K562 (cell line): ENCODE measurements at regions of chr3 and their contacts with region 1.

Region 1: GRCh38 chr3:196192036-196192523 is 19.1 kb downstream of the ZDHHC19 start:
- DNase-seq: peak in 1 of 4 experiments; percentile 34
- ATAC-seq: no peak
- H3K4me3 ChIP-seq: no peak overlapping the region
- H3K27ac ChIP-seq: peak overlapping the region; percentile 62; the same call in 2 of the 3 replicates
- H3K4me1 ChIP-seq: peaks cover 46 to 83% of the 10 kb centered on the region in 2 experiments
- H3K27me3 ChIP-seq: no peaks in the 10 kb centered on the region
- CTCF ChIP-seq: no peak
- EP300 ChIP-seq: no peak
- POLR2A ChIP-seq: no peak
- RAD21 ChIP-seq: peak in 1 of 2 experiments; percentile 24; a peak in 1 of 4 replicates

Region 2: DNA sequence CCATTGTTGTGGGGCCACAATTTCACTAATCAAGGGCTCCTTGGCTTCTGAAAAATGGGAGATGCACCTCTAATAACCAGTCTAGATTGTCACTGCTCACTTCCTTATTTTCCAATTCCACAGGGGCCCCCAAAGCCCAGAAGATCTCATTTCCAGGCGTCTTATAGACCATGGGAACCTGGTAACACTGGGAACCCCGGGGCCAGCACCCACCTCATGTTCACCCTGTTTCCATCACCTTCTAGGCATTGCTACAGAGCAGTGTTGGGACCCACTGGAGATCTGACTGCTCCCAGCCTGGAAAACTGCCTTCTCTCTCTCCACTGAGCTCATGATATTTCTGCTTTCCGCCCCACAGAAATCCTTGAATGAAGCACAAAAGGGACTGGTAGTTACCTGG is 171.7 kb before region 1 on chr3:
- CTCF ChIA-PET with region 1: interaction called, 19 read pairs
- POLR2A ChIA-PET with region 1: interaction called, 4 read pairs
- in situ Hi-C with region 1: no loop called
- intact Hi-C with region 1: loop called (anchors 1 kb)
- DNase-seq: no peak
- ATAC-seq: no peak
- H3K4me3 ChIP-seq: no peak overlapping the region
- H3K27ac ChIP-seq: no peak overlapping the region
- H3K4me1 ChIP-seq: peaks cover 6 to 7% of the 10 kb centered on the region in 2 experiments; a peak in 4 of 5 replicates
- H3K27me3 ChIP-seq: no peaks in the 10 kb centered on the region
- CTCF ChIP-seq: no peak
- EP300 ChIP-seq: no peak
- POLR2A ChIP-seq: no peak
- RAD21 ChIP-seq: no peak

Region 3: GRCh38 chr3:196073188-196073838 is 118.8 kb before region 1 on chr3:
- CTCF ChIA-PET with region 1: interaction called, 49 read pairs
- POLR2A ChIA-PET with region 1: interaction called, 28 read pairs
- in situ Hi-C with region 1: loop called (anchors 5 kb)
- intact Hi-C with region 1: loop called (anchors 1 kb)
- DNase-seq: peak; percentile 41 to 75 (median 50)
- ATAC-seq: peak; percentile 88
- H3K4me3 ChIP-seq: no peak overlapping the region
- H3K27ac ChIP-seq: no peak overlapping the region
- H3K4me1 ChIP-seq: peaks cover 7 to 9% of the 10 kb centered on the region in 2 experiments; a peak in 3 of 5 replicates
- H3K27me3 ChIP-seq: no peaks in the 10 kb centered on the region
- CTCF ChIP-seq: peak; percentile 66 to 80 (median 74)
- EP300 ChIP-seq: no peak
- POLR2A ChIP-seq: peak; percentile 55
- RAD21 ChIP-seq: peak; percentile 67 to 75

Region 4: DNA sequence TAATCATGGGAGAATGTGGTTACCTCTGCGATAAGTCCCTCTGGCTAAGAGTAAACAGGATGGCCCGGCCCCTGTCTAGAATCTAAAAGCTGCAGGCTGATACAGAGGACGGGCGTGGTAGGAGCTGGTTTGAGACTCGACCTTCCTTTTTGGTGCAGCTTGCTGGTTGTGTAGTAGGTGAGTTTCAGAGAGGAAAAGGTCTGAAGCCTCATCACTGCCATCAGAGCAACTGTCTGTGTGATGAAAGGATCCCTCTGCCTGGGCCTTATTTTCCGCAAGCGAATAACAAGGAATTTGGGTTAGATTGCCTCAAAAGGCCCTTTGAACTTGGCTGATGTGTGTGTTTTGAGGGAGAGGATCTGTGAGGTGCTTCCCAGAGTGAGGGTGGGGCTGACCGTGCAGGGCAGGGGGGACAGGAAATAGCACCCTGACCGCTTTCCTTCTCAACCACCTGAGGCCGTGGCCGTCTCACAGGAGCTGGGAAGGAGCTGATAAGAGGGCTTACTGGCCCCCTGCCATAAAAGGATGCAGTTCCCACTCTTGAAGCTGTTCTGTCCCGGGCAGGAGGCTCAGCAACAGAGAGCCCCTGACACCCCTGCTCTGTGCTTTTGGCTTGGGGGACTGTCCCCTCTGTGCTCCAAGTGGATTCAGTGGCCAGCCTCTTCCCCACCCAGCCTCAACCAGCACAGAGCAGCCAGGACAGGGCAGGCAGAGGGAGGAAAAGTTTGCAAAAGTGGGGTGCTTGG is 64.6 kb before region 1 on chr3:
- CTCF ChIA-PET with region 1: no interaction called
- POLR2A ChIA-PET with region 1: no interaction called
- in situ Hi-C with region 1: no loop called
- intact Hi-C with region 1: loop called (anchors 2 kb)
- DNase-seq: peak; percentile 81 to 98 (median 88)
- ATAC-seq: peak; percentile 90
- H3K4me3 ChIP-seq: peak overlapping the region; percentile 14; the same call in 1 of the 2 replicates
- H3K27ac ChIP-seq: peak overlapping the region; percentile 96
- H3K4me1 ChIP-seq: peaks cover 33% of the 10 kb centered on the region in 2 experiments
- H3K27me3 ChIP-seq: no peaks in the 10 kb centered on the region
- CTCF ChIP-seq: peak in 2 of 3 experiments; percentile 15 to 49; a peak in 2 of 6 replicates
- EP300 ChIP-seq: peak; percentile 89
- POLR2A ChIP-seq: peak; percentile 53; the same call in 1 of the 2 replicates
- RAD21 ChIP-seq: peak; percentile 43 to 67; a peak in 3 of 4 replicates

Region 5: GRCh38 chr3:196251918-196252317 is 59.8 kb after region 1 on chr3:
- CTCF ChIA-PET with region 1: no interaction called
- POLR2A ChIA-PET with region 1: no interaction called
- in situ Hi-C with region 1: no loop called
- intact Hi-C with region 1: no loop called
- DNase-seq: no peak
- ATAC-seq: no peak
- H3K4me3 ChIP-seq: no peak overlapping the region
- H3K27ac ChIP-seq: no peak overlapping the region
- H3K4me1 ChIP-seq: no peaks in the 10 kb centered on the region
- H3K27me3 ChIP-seq: no peaks in the 10 kb centered on the region
- CTCF ChIP-seq: no peak
- EP300 ChIP-seq: no peak
- POLR2A ChIP-seq: no peak
- RAD21 ChIP-seq: no peak

Region 6: DNA sequence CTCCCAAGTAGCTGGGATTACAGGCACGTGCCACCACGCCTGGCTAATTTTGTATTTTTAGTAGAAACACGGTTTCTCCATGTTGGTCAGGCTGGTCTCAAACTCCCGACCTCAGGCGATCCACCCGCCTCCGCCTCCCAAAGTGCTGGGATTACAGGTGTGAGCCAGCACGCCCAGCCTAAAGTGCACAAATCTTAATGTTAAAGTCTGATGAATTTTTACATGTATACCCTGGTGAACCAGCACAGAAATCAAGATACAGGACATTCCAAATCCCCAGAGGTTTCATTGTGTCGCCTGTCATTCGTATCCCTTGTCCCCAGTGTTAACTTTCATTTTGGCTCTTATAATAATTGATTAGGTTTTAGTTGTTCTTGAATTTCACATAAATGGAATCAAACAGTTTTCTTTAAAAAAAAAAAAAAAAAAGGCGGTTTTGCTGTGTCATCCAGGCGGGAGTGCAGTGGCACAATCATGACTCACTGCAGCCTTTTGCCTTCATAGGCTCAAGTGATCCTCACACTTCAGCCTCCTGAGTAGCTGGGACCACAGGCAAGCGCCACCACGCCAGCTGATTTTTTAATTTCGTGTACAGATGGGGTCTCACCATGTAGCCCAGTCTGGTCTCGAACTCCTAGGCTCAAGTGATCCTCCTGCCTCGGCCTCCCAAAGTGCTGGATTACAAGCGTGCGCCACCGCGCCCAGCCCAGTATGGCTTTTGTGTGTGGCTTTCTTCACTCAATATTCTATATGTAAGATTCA is 147.6 kb after region 1 on chr3:
- CTCF ChIA-PET with region 1: no interaction called
- POLR2A ChIA-PET with region 1: no interaction called
- in situ Hi-C with region 1: no loop called
- intact Hi-C with region 1: no loop called
- DNase-seq: peak; percentile 26 to 83 (median 30)
- ATAC-seq: peak; percentile 49
- H3K4me3 ChIP-seq: peak overlapping the region; percentile 54
- H3K27ac ChIP-seq: peak overlapping the region; percentile 100
- H3K4me1 ChIP-seq: peaks cover 12 to 34% of the 10 kb centered on the region in 2 experiments
- H3K27me3 ChIP-seq: no peaks in the 10 kb centered on the region
- CTCF ChIP-seq: no peak
- EP300 ChIP-seq: peak; percentile 40
- POLR2A ChIP-seq: peak; percentile 80
- RAD21 ChIP-seq: 0 out of 4 replicates have a peak, but pooled peaks of 1 of the 2 experiments have one; percentile 14